Natural killer cell (primary cell): ENCODE measurements at regions of chr7 and their contacts with region 1.

Region 1: DNA sequence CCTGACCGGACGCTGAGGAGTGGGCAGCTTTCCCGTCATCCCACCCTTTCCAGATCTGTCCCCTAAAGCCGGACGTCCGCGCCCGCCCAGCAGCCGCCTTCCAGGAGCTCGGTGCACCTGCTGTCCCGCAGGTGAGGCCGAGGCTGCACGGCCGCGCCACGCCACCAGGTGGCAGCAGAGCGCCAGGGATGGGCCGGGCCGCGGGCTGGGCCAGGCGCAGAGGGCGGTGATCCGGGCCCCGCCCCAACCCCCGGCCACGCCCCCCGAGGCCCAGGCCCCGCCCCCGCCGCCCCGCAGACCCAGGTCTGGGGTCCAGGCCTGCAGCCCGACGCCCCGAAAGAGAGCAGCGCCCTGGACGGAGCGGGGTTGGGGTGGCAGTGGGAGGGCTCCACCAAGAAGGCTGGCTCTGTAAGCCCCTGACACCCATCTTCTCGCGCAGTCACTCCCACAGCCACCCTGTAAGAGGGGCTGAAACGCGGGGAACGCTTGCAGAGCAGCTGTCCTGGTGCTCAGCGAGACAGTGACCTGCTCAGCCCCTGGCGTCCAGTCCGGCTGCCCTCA is 32.2 kb downstream of the FOXL3 start:
- DNase-seq: peak; percentile 83 to 90
- ATAC-seq: peak; percentile 93 to 100 (median 100)
- H3K4me3 ChIP-seq: no peak overlapping the region
- H3K4me3 Mint-ChIP-seq: no peak overlapping the region
- H3K27ac ChIP-seq: no peak overlapping the region
- H3K27ac Mint-ChIP-seq: no peak overlapping the region
- H3K4me1 ChIP-seq: peaks cover 8% of the 10 kb centered on the region
- H3K4me1 Mint-ChIP-seq: no peaks in the 10 kb centered on the region
- H3K27me3 ChIP-seq: no peaks in the 10 kb centered on the region
- H3K27me3 Mint-ChIP-seq: peaks cover 15 to 24% of the 10 kb centered on the region in 2 donors
- CTCF ChIP-seq: peak; percentile 96

Region 2: GRCh38 chr7:636396-636795 is 314.2 kb after region 1 on chr7:
- intact Hi-C with region 1: loop called (anchors 2 kb)
- DNase-seq: peak; percentile 65 to 74
- ATAC-seq: peak; percentile 59 to 99 (median 98)
- H3K4me3 ChIP-seq: no peak overlapping the region
- H3K4me3 Mint-ChIP-seq: no peak overlapping the region
- H3K27ac ChIP-seq: no peak overlapping the region
- H3K27ac Mint-ChIP-seq: peak overlapping the region; percentile 73 to 94
- H3K4me1 ChIP-seq: peaks cover 8% of the 10 kb centered on the region
- H3K4me1 Mint-ChIP-seq: peaks cover 5 to 6% of the 10 kb centered on the region in 2 donors
- H3K27me3 ChIP-seq: no peaks in the 10 kb centered on the region
- H3K27me3 Mint-ChIP-seq: no peaks in the 10 kb centered on the region
- CTCF ChIP-seq: peak; percentile 65

Region 3: GRCh38 chr7:774161-775109 is 452.2 kb after region 1 on chr7:
- intact Hi-C with region 1: loop called (anchors 5 kb)
- DNase-seq: peak; percentile 39 to 75
- ATAC-seq: peak; percentile 38 to 86 (median 76)
- H3K4me3 ChIP-seq: no peak overlapping the region
- H3K4me3 Mint-ChIP-seq: no peak overlapping the region
- H3K27ac ChIP-seq: no peak overlapping the region
- H3K27ac Mint-ChIP-seq: no peak overlapping the region
- H3K4me1 ChIP-seq: no peaks in the 10 kb centered on the region
- H3K4me1 Mint-ChIP-seq: no peaks in the 10 kb centered on the region
- H3K27me3 ChIP-seq: no peaks in the 10 kb centered on the region
- H3K27me3 Mint-ChIP-seq: no peaks in the 10 kb centered on the region
- CTCF ChIP-seq: peak; percentile 62

Region 4: GRCh38 chr7:876167-876967 is 554.2 kb after region 1 on chr7 and contains the start of gene GET4:
- intact Hi-C with region 1: loop called (anchors 1 kb)
- DNase-seq: peak; percentile 97 to 98
- ATAC-seq: peak; percentile 80 to 93 (median 82)
- H3K4me3 ChIP-seq: peak within 1 kb of the TSS; percentile 87
- H3K4me3 Mint-ChIP-seq: peak within 1 kb of the TSS; percentile 99
- H3K27ac ChIP-seq: peak within 1 kb of the TSS; percentile 90
- H3K27ac Mint-ChIP-seq: peak within 1 kb of the TSS; percentile 89 to 94
- H3K4me1 ChIP-seq: peaks cover 32% of the 10 kb centered on the region
- H3K4me1 Mint-ChIP-seq: peaks cover 19 to 23% of the 10 kb centered on the region in 2 donors
- H3K27me3 ChIP-seq: no peaks in the 10 kb centered on the region
- H3K27me3 Mint-ChIP-seq: no peaks in the 10 kb centered on the region
- CTCF ChIP-seq: no peak
- total RNA-seq, gene GET4: 69.3 to 81.6 (median 73.2) TPM

Region 5: DNA sequence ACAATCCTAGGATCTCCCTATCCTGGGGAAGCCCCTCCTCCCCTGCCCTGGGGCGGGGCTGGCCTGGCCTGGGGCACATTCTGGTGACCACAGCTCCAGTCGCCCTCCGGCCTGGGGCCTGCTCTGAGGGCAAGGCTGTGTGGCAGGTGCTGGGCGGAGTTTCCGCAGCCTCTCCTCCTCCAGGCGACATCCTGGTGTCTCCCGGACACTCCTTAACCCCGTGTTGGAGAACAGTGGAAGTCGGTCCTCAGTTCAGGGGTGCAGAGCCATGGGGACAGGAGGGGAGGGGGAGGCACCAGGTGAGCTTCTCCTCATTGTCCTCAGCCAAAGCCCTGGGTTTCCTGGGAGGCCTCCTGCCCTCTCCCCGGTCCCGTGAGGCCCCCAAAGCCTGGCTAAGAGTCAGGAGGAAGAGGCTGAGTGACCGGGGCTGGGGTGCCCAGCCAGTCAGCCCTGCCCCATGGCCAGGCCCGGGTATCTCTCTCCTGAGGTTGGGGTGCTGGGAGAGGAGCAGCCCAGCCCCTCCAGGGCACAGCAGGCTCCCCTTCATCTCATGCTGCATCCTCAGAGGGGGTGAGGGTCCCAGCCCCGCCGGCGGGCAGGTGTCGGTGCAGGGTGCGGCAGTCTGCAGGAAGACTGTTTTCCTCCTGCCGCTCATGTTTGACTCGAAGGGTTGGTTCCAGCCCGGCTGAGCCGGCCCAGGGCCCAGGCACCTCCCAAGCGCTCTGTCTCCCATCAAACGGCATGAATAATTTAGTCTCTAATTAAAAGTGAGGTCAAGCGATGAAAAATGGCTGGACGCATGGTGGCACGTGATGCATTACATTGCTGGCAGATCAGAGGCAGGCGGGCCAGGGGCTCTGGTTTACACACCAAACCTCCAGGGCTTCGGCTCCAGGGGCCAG is 933.2 kb after region 1 on chr7:
- intact Hi-C with region 1: no loop called
- DNase-seq: no peak
- ATAC-seq: no peak
- H3K4me3 ChIP-seq: no peak overlapping the region
- H3K4me3 Mint-ChIP-seq: no peak overlapping the region
- H3K27ac ChIP-seq: no peak overlapping the region
- H3K27ac Mint-ChIP-seq: no peak overlapping the region
- H3K4me1 ChIP-seq: no peaks in the 10 kb centered on the region
- H3K4me1 Mint-ChIP-seq: no peaks in the 10 kb centered on the region
- H3K27me3 ChIP-seq: peaks cover 7% of the 10 kb centered on the region
- H3K27me3 Mint-ChIP-seq: peaks cover 14 to 23% of the 10 kb centered on the region in 2 donors
- CTCF ChIP-seq: no peak